ENCODE measurements at regions of chr4 and their contacts with region 1.

Region 1: GRCh38 chr4:159308566-159309340 is 205.9 kb downstream of the RAPGEF2 start:
- DNase-seq: peak; percentile 62
- ATAC-seq: peak; percentile 83
- H3K4me3 ChIP-seq: no peak overlapping the region
- H3K27ac ChIP-seq: peak overlapping the region; percentile 65
- H3K4me1 ChIP-seq: peaks cover 5% of the 10 kb centered on the region; the same call in 1 of the 2 replicates
- H3K27me3 ChIP-seq: no peaks in the 10 kb centered on the region
- CTCF ChIP-seq: no peak
- POLR2A ChIP-seq: no peak
- RAD21 ChIP-seq: no peak

Region 2: DNA sequence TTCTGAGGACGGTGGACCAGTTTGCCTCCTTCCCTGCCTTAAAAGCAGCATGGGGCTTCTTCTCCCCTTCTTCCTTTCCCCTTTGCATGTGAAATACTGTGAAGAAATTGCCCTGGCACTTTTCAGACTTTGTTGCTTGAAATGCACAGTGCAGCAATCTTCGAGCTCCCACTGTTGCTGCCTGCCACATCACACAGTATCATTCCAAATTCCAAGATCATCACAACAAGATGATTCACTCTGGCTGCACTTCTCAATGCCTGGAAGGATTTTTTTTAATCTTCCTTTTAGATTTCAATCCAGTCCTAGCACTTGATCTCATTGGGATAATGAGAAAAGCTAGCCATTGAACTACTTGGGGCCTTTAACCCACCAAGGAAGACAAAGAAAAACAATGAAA is 49.5 kb after region 1 on chr4:
- CTCF ChIA-PET with region 1: no interaction called
- POLR2A ChIA-PET with region 1: no interaction called
- dilution Hi-C with region 1: no loop called
- in situ Hi-C with region 1: no loop called
- intact Hi-C with region 1: loop called (anchors 1 kb)
- DNase-seq: peak; percentile 90
- ATAC-seq: peak; percentile 82
- H3K4me3 ChIP-seq: no peak overlapping the region
- H3K27ac ChIP-seq: peak overlapping the region; percentile 81
- H3K4me1 ChIP-seq: peaks cover 13% of the 10 kb centered on the region
- H3K27me3 ChIP-seq: no peaks in the 10 kb centered on the region
- CTCF ChIP-seq: no peak
- POLR2A ChIP-seq: no peak
- RAD21 ChIP-seq: peak; percentile 18; the same call in 1 of the 2 replicates

Region 3: DNA sequence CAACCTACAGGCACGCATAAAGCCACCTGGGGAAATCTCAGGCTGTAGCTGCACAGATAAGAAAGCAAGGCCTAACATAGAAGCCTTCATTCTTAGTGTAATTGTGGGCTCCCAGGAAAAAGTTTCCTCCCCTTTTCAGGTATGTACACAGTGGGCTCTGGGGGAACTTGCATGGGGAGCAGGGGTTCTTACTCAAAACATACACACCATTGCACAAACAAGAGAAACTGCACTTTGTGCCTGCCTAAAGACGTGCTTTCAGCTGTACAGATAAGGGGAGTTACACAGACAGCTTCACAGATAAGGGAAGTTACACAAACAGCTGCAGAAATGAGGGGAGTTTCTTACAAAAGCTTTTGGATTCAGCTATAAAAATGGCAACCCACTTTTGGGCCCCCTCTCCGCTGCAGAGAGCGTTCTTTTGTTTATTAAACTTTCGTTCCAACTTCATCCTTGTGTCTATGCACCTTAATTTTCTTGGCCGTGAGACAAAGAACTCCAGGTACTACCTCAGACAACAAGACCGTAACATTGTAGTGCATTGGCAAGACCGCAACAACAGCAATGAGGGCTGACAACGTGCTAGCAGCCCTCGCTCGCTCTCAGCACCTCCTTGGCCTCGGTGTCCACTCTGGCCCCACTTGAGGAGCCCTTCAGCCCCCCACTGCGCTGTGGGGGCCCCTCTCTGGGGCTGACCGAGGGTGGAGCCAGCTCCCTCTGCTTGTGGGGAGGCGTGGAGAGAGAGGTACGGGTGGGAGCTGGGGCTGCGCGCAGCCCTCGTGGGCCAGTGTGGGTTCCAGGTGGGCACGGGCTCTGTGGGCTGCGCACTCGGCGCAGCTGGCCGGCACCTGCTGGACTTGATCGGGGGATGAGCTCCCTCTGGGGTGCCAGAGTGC is 111.7 kb after region 1 on chr4:
- CTCF ChIA-PET with region 1: no interaction called
- POLR2A ChIA-PET with region 1: no interaction called
- dilution Hi-C with region 1: no loop called
- in situ Hi-C with region 1: no loop called
- intact Hi-C with region 1: no loop called
- DNase-seq: no peak
- ATAC-seq: no peak
- H3K4me3 ChIP-seq: no peak overlapping the region
- H3K27ac ChIP-seq: no peak overlapping the region
- H3K4me1 ChIP-seq: no peaks in the 10 kb centered on the region
- H3K27me3 ChIP-seq: no peaks in the 10 kb centered on the region
- CTCF ChIP-seq: no peak
- POLR2A ChIP-seq: no peak
- RAD21 ChIP-seq: no peak

Measured in IMR-90 (cell line).